AG04450 (cell line): ENCODE measurements at regions of chr1 and their contacts with region 1.

Region 1: GRCh38 chr1:33295450-33296081 is 25.3 kb downstream of the A3GALT2 start:
- DNase-seq: peak; percentile 49
- H3K4me3 ChIP-seq: no peak overlapping the region
- H3K27ac ChIP-seq: no peak overlapping the region
- H3K27me3 ChIP-seq: no peaks in the 10 kb centered on the region
- CTCF ChIP-seq: peak; percentile 96

Region 2: DNA sequence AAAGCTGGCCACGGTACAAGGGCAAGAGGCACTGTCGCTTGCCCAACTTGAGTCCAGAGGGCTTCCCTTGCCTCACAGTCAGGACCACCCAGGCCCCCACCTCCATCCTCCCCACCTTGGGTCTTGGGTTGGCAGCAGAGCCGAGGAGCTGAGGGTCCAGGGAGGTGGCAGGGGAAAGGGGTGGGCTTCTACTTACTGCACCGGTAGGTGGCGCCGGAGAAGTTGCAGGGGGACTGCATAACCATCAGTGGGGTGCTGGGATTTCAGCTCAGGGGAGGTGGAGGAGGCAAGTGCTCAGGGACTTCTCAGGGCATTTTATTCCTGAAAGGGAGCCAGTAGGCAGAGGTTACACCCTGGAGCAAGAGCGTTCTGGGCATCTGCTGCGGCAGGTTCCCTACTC is 157.8 kb before region 1 on chr1:
- CTCF ChIA-PET with region 1: interaction called, 17 read pairs
- POLR2A ChIA-PET with region 1: interaction called, 11 read pairs
- DNase-seq: no peak
- H3K4me3 ChIP-seq: no peak overlapping the region
- H3K27ac ChIP-seq: no peak overlapping the region
- H3K27me3 ChIP-seq: no peaks in the 10 kb centered on the region
- CTCF ChIP-seq: peak; percentile 59

Region 3: GRCh38 chr1:33273406-33273805 is 22.2 kb before region 1 on chr1:
- CTCF ChIA-PET with region 1: interaction called, 21 read pairs
- POLR2A ChIA-PET with region 1: no interaction called
- DNase-seq: no peak
- H3K4me3 ChIP-seq: no peak overlapping the region
- H3K27ac ChIP-seq: no peak overlapping the region
- H3K27me3 ChIP-seq: no peaks in the 10 kb centered on the region
- CTCF ChIP-seq: no peak

Region 4: GRCh38 chr1:33319949-33320605 is 24.5 kb after region 1 on chr1:
- CTCF ChIA-PET with region 1: interaction called, 23 read pairs
- POLR2A ChIA-PET with region 1: interaction called, 10 read pairs
- DNase-seq: no peak
- H3K4me3 ChIP-seq: no peak overlapping the region
- H3K27ac ChIP-seq: no peak overlapping the region
- H3K27me3 ChIP-seq: no peaks in the 10 kb centered on the region
- CTCF ChIP-seq: no peak

Region 5: DNA sequence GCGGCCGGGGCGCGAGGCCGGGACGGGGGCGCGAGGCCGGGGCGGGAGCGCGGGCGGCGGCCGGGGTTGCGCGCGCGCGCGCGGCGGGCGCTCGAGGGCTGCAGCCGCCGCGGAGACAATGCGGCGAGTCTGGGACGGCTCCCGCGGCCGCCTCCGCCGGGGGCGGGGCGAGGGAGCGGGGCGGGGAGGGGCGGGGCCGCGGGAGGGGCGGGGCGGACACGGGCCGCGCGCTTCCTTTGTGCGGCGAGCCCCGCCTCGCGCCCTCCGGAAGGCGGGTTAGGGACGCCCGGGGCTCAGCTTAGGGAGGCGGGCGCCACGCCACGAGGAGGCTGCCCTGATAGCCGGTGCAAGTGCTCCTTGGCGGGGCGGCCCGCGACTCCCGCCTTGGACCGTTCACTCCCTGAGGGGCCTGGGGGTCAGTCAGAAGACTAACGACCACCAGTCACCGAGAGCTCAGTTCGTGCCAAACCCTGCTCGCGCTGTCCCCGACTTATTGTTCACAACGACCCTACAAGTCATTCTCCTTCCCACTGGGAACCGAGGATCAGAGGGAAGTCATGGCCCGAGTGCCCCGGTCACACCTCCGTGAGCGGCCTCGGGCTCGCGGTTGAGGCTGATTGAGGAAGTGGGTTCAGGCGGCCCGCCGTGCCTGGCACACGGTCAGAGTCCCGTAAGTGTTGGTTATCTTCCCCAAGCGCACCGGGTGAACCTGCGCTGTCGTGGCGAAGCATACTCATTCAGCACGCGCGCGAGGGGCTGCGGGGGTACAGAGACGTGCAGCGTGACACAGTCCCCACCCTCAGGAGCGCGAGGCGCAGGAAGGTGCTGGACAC is 54.4 kb after region 1 on chr1:
- CTCF ChIA-PET with region 1: interaction called, 10 read pairs
- POLR2A ChIA-PET with region 1: interaction called, 5 read pairs
- DNase-seq: no peak
- H3K4me3 ChIP-seq: peak overlapping the region; percentile 87
- H3K27ac ChIP-seq: peak overlapping the region; percentile 57
- H3K27me3 ChIP-seq: no peaks in the 10 kb centered on the region
- CTCF ChIP-seq: no peak

Region 6: DNA sequence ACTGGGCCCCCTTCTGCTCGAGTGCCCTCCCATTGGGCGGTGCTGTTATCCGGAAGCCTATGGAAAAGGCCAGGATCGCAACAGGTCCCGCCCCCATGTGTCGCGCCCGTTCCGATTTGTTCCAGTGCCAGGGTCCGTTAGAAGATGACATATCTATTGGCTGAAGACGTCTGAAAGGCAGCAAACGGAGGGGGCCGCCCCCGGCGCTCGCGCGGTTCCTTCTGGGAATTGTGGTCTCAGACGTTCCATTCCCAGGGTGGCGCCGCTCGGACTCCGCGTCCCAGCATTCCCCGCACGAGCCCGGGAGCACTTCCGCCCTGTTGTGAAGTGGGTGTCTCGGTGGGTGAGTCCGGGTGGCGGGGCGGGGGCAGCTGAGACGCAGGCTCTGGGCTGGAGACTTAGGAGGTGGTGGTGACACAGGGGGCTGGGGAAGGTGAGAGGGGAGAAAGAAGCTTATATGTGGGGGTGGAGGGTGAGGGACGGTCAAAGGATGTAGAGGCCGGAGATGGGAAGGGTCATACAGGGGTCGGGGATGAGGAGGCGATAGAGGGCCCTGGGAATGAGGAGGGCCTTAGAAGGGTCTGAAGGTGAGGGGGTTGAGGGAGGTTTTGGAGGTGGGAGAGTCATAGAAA is 176.9 kb after region 1 on chr1 and contains the start of gene ZSCAN20:
- CTCF ChIA-PET with region 1: interaction called, 212 read pairs
- POLR2A ChIA-PET with region 1: interaction called, 4 read pairs
- DNase-seq: peak; percentile 95
- H3K4me3 ChIP-seq: peak within 1 kb of the TSS; percentile 86
- H3K27ac ChIP-seq: peak within 1 kb of the TSS; percentile 42
- H3K27me3 ChIP-seq: no peaks in the 10 kb centered on the region
- CTCF ChIP-seq: no peak
- polyA plus RNA-seq, gene ZSCAN20: 3.5 and 3.9 TPM in 2 replicates